ENCODE measurements at regions of chr11 and their contacts with region 1.

Region 1: DNA sequence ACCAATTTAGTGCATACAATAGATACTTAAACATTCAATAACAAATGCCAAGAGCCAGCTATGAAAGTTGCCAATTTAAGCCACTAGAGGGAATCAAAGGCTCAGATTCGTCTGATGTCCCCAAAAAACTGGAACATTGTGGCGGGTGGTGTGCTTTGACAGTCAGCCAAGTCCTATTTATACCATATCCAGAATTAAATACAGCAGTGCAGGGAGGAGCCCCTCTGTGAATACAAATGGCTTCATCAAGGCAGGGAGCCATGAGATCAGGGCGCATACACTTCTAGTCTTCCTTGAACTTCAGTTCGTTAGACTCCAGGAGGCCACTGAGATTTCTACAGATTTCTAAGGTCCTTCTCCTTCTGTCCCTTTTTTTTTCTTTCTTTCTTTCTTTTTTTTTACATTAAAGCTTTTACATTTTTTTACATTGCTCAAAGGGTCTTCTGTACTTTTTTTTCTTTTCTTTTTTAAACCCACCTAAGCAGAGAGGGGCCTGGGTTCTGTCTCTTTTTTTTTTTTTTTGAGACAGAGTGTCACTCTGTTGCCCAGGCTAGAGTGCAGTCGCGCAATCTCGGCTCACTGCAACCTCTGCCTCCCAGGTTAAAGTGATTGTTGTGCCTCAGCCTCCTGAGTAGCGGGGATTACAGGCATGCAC is 41.5 kb upstream of the HSPA8 start:
- DNase-seq: peak; percentile 59
- ATAC-seq: peak; percentile 85
- H3K4me3 ChIP-seq: no peak overlapping the region
- H3K27ac ChIP-seq: no peak overlapping the region
- H3K4me1 ChIP-seq: no peaks in the 10 kb centered on the region
- H3K27me3 ChIP-seq: no peaks in the 10 kb centered on the region
- CTCF ChIP-seq: peak; percentile 87

Region 2: GRCh38 chr11:123145220-123145619 is 41.8 kb after region 1 on chr11:
- CTCF ChIA-PET with region 1: interaction called, 12 read pairs
- POLR2A ChIA-PET with region 1: no interaction called
- in situ Hi-C with region 1: no loop called
- intact Hi-C with region 1: no loop called
- DNase-seq: peak; percentile 72
- ATAC-seq: peak; percentile 92
- H3K4me3 ChIP-seq: peak overlapping the region in 1 of 2 experiments; percentile 40; a peak in 2 of 4 replicates
- H3K27ac ChIP-seq: no peak overlapping the region
- H3K4me1 ChIP-seq: peaks cover 7% of the 10 kb centered on the region
- H3K27me3 ChIP-seq: no peaks in the 10 kb centered on the region
- CTCF ChIP-seq: no peak

Region 3: DNA sequence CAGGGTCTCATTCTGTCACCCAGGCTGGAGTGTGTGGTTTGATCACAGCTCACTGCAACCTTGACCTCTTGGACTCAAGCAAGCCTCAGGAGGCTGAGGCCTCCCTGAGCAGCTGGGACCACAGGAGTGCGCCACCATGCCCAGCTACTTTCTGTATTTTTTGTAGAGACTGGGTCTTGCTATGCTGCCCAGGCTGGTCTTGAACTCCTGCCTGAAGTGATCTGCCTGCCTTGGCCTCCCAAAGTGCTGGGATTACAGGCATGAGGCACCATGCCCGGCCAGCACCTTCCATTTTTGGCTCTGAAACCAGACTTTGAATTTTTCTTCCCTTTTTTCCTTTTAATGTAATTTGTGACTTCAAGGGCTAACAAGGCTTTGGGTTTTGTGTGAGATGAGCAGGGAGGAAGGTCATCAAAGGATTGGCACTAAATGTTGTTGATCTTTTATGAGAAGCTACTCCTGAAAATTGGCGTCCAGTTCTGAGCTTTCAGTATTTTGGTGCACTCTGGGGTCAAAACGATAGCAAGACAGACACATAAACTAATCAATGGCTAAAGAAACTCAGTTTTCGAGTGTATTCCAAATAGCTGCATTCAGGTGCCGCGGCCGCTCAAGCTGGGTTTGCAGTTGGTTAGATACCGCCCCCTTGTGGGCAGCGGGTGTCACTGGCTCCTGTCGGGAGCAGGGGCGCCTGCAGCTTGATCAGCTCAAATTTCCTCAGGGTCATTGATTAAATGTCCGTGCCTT is 143.5 kb after region 1 on chr11:
- CTCF ChIA-PET with region 1: interaction called, 36 read pairs
- POLR2A ChIA-PET with region 1: interaction called, 3 read pairs
- in situ Hi-C with region 1: no loop called
- intact Hi-C with region 1: loop called (anchors 2 kb)
- DNase-seq: peak; percentile 61
- ATAC-seq: peak; percentile 97
- H3K4me3 ChIP-seq: peak overlapping the region in 1 of 2 experiments; percentile 10; a peak in 2 of 4 replicates
- H3K27ac ChIP-seq: no peak overlapping the region
- H3K4me1 ChIP-seq: peaks cover 2% of the 10 kb centered on the region; the same call in 1 of the 2 replicates
- H3K27me3 ChIP-seq: peaks cover 2% of the 10 kb centered on the region; the same call in 1 of the 2 replicates
- CTCF ChIP-seq: peak; percentile 99

Region 4: DNA sequence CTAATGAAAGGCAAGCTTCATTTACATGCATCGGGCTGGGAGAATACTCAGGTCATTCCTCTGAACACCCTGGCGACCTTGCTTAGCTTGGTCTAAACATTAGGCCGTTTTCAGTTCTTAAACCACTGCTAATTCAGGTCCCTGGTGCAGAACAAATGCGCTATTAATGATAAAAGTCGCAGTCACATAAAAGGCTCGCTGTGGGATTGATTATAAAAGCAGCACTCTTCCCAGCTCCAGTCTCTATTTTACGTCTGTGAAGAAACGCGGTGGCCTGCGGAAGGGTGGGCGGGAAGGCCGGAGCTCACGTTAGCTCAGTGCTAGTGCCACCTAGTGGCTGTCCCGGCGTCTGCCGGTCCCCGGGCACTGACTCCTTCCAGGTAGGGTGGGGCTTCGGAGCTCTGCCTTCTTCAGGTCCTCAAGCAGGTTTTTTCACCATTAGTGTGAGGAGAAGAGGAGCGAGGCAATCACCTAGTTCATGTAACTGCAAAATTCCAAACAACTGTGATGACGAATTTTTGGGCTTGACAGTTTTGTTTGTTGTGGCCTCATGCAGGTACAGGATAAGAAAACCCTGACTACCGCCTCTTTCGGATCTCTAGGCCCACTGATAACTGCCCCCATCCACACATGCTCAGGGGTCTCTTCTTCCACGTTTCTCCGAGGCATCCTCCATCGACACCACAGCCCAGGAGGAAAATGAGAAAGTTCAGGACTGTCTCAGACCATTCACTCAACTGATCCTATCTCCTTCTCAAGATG is 158.1 kb after region 1 on chr11:
- CTCF ChIA-PET with region 1: interaction called, 17 read pairs
- POLR2A ChIA-PET with region 1: no interaction called
- in situ Hi-C with region 1: no loop called
- intact Hi-C with region 1: no loop called
- DNase-seq: peak; percentile 13
- ATAC-seq: peak; percentile 97
- H3K4me3 ChIP-seq: peak overlapping the region; percentile 21 to 60
- H3K27ac ChIP-seq: 0 out of 2 replicates have a peak overlapping the region, but pooled peaks have one; percentile 34
- H3K4me1 ChIP-seq: peaks cover 7% of the 10 kb centered on the region; the same call in 1 of the 2 replicates
- H3K27me3 ChIP-seq: peaks cover 10% of the 10 kb centered on the region; the same call in 1 of the 2 replicates
- CTCF ChIP-seq: peak; percentile 99

Region 5: GRCh38 chr11:123478352-123478987 is 375.0 kb after region 1 on chr11:
- CTCF ChIA-PET with region 1: interaction called, 7 read pairs
- POLR2A ChIA-PET with region 1: no interaction called
- in situ Hi-C with region 1: no loop called
- intact Hi-C with region 1: loop called (anchors 5 kb)
- DNase-seq: peak; percentile 61
- ATAC-seq: peak; percentile 85
- H3K4me3 ChIP-seq: 0 out of 4 replicates have a peak overlapping the region, but pooled peaks of 1 of the 2 experiments have one; percentile 1
- H3K27ac ChIP-seq: no peak overlapping the region
- H3K4me1 ChIP-seq: no peaks in the 10 kb centered on the region
- H3K27me3 ChIP-seq: peaks cover 10% of the 10 kb centered on the region
- CTCF ChIP-seq: peak; percentile 86

Region 6: DNA sequence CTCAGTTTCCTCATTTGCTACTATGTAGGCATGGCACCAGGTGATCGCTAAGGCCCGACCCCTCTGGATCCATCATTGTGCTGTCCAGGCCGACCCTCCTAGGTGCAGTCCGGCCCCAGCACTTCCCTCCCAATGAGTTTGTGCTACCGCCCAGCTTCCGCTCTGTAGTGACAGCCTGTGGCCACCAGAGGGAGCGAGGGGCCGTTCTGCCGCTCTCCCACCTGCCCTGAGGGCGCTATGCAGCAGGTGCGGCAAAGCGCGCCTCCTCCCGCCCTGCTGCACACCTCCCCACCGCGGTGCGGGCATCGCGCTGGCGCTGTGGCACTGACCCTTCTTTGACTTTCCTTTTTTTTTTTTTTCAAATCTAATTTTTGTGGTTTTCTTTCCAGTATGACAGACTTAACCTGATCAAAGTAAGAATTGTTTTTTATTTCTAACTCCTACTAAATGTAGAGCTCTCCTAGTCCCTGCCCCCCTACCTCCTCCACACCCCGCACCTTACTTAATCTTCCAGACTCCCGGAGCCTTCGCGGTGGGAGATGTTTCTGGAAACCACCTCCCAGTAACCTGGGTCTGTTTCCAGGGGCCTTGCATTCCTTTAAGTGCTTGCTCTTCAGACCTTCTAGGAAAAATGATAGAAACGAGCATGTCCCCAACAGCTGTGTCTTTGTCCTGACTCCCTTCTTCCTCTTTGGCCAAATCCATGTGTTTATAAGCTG is 477.3 kb after region 1 on chr11:
- CTCF ChIA-PET with region 1: no interaction called
- POLR2A ChIA-PET with region 1: no interaction called
- in situ Hi-C with region 1: no loop called
- intact Hi-C with region 1: loop called (anchors 10 kb)
- DNase-seq: peak; percentile 32
- ATAC-seq: peak; percentile 83
- H3K4me3 ChIP-seq: no peak overlapping the region
- H3K27ac ChIP-seq: no peak overlapping the region
- H3K4me1 ChIP-seq: no peaks in the 10 kb centered on the region
- H3K27me3 ChIP-seq: peaks cover 17% of the 10 kb centered on the region
- CTCF ChIP-seq: peak; percentile 99

Measured in Panc1 (cell line).